ENCODE measurements at regions of chr7 and their contacts with region 1.

Region 1: GRCh38 chr7:24587848-24588247 is 14.6 kb downstream of the PALS2 start:
- DNase-seq: peak in 3 of 4 experiments; percentile 14 to 55 (median 19)
- ATAC-seq: peak; percentile 95
- H3K4me3 ChIP-seq: no peak overlapping the region
- H3K27ac ChIP-seq: no peak overlapping the region
- H3K4me1 ChIP-seq: peaks cover 0 to 2% of the 10 kb centered on the region in 2 experiments; a peak in 1 of 5 replicates
- H3K27me3 ChIP-seq: no peaks in the 10 kb centered on the region
- CTCF ChIP-seq: peak; percentile 67 to 90 (median 87)
- EP300 ChIP-seq: no peak
- POLR2A ChIP-seq: no peak
- RAD21 ChIP-seq: peak; percentile 53 to 71

Region 2: GRCh38 chr7:24304494-24305095 is 283.3 kb before region 1 on chr7:
- CTCF ChIA-PET with region 1: no interaction called
- POLR2A ChIA-PET with region 1: no interaction called
- in situ Hi-C with region 1: no loop called
- intact Hi-C with region 1: no loop called
- DNase-seq: no peak
- ATAC-seq: no peak
- H3K4me3 ChIP-seq: no peak overlapping the region
- H3K27ac ChIP-seq: no peak overlapping the region
- H3K4me1 ChIP-seq: no peaks in the 10 kb centered on the region
- H3K27me3 ChIP-seq: peaks cover 0 to 4% of the 10 kb centered on the region in 2 experiments; a peak in 1 of 5 replicates
- CTCF ChIP-seq: no peak
- EP300 ChIP-seq: no peak
- POLR2A ChIP-seq: no peak
- RAD21 ChIP-seq: no peak

Region 3: DNA sequence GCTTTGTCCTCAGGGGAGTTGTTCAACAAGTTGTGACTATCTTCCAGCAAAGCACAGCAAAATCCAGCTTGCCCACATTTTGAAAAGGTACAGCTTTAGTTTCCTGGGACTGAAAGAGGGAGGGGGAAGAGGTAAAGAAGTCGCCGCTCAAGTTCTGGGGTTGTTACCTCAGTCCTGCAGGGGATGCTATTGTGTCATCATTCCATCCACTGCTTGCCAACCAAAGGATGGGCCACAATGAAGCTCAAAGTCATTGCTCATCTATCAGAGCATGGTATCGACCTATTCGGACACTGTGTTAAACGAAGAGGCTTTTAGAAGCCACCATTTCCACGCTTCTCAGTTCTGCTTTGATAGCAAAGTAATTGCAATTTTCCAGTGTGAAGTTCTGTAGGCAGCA is 269.5 kb before region 1 on chr7:
- CTCF ChIA-PET with region 1: no interaction called
- POLR2A ChIA-PET with region 1: no interaction called
- in situ Hi-C with region 1: no loop called
- intact Hi-C with region 1: loop called (anchors 10 kb)
- DNase-seq: peak; percentile 21 to 38 (median 25)
- ATAC-seq: peak; percentile 78
- H3K4me3 ChIP-seq: no peak overlapping the region
- H3K27ac ChIP-seq: no peak overlapping the region
- H3K4me1 ChIP-seq: no peaks in the 10 kb centered on the region
- H3K27me3 ChIP-seq: peaks cover 0 to 7% of the 10 kb centered on the region in 2 experiments; a peak in 2 of 5 replicates
- CTCF ChIP-seq: peak; percentile 57 to 62 (median 61)
- EP300 ChIP-seq: no peak
- POLR2A ChIP-seq: no peak
- RAD21 ChIP-seq: peak; percentile 28 to 69; a peak in 3 of 4 replicates

Region 4: GRCh38 chr7:24401628-24402593 is 185.9 kb before region 1 on chr7:
- CTCF ChIA-PET with region 1: no interaction called
- POLR2A ChIA-PET with region 1: no interaction called
- in situ Hi-C with region 1: no loop called
- intact Hi-C with region 1: loop called (anchors 5 kb)
- DNase-seq: peak; percentile 8 to 15 (median 12)
- ATAC-seq: peak; percentile 63; the same call in 1 of the 3 replicates
- H3K4me3 ChIP-seq: no peak overlapping the region
- H3K27ac ChIP-seq: no peak overlapping the region
- H3K4me1 ChIP-seq: no peaks in the 10 kb centered on the region
- H3K27me3 ChIP-seq: peaks cover 0 to 2% of the 10 kb centered on the region in 2 experiments; a peak in 2 of 5 replicates
- CTCF ChIP-seq: peak; percentile 22 to 50 (median 37); a peak in 4 of 6 replicates
- EP300 ChIP-seq: no peak
- POLR2A ChIP-seq: no peak
- RAD21 ChIP-seq: peak in 1 of 2 experiments; percentile 52; a peak in 3 of 4 replicates